ENCODE measurements at regions of chr12 and their contacts with region 1.

Region 1: DNA sequence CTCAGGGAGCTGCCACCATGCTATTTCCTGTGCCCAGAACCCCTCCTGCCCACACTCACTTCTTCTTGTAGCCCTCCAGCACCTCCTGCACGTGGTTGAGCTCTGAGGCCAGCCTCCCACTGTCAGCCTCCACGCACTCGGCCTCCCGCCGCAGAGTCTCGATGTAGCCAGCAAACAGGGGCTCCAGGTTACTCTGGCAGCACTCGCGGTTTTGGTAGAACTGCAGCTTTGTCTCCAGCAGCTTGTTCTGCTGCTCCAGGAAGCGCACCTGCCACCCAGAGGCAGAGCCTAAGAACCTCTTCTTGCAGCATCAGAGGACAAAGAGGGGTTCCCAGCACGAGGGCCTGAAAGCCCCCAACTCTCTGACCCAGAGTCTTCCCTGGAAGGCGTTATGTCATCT is 2.1 kb downstream of the KRT83 start:
- DNase-seq: no peak
- H3K4me3 ChIP-seq: no peak overlapping the region
- H3K27me3 ChIP-seq: peaks cover 9% of the 10 kb centered on the region
- CTCF ChIP-seq: peak; percentile 10; the same call in 1 of the 2 replicates

Region 2: DNA sequence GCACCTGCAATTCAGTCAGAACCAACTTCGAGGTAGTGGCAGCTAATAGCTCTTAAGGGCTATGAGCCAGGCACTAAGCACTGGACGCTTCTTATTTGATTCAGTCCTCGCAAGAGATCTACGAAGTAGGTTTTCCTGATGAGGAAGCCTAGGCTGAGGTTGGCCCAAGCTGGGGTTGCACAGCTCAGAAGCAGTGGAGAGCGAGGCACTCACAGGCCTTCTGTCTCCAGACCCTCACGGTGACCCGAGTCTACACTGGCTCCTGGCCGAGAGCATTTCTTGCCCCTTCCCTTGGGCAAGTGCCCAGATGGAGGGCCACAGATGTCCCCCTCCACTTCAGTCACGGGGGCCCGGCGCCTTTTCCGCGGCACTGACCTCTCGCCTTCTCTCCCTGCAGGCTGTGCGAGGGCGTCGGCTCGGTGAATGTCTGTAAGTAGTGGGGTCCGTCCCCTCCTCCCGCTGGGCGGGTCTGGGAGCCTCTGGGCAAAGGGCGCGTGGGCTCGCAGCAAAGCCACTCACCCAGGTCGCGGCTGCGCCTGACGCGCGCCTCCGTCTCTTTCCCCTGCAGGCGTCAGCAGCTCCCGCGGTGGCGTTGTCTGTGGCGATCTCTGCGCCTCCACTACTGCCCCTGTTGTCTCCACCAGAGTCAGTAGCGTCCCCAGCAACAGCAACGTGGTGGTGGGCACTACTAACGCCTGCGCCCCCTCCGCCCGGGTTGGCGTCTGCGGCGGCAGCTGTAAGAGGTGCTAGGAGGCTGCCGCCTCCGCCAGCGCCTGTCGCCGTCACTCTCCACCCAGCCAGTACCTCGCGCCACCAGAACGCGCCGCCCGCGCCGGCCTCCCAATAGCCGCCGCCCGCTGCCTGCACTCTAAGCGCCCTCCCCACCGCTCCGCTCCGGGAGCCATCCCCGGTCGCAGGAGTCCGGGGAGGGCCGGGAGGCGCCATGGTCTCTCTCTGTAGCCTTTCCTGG is 11.0 kb before region 1 on chr12:
- CTCF ChIA-PET with region 1: interaction called, 53 read pairs
- POLR2A ChIA-PET with region 1: no interaction called
- DNase-seq: no peak
- H3K4me3 ChIP-seq: peak overlapping the region; percentile 42
- H3K27me3 ChIP-seq: no peaks in the 10 kb centered on the region; the same call in 1 of the 2 replicates
- CTCF ChIP-seq: peak; percentile 21; the same call in 1 of the 2 replicates